ENCODE measurements at regions of chr9 and their contacts with region 1.

Region 1: DNA sequence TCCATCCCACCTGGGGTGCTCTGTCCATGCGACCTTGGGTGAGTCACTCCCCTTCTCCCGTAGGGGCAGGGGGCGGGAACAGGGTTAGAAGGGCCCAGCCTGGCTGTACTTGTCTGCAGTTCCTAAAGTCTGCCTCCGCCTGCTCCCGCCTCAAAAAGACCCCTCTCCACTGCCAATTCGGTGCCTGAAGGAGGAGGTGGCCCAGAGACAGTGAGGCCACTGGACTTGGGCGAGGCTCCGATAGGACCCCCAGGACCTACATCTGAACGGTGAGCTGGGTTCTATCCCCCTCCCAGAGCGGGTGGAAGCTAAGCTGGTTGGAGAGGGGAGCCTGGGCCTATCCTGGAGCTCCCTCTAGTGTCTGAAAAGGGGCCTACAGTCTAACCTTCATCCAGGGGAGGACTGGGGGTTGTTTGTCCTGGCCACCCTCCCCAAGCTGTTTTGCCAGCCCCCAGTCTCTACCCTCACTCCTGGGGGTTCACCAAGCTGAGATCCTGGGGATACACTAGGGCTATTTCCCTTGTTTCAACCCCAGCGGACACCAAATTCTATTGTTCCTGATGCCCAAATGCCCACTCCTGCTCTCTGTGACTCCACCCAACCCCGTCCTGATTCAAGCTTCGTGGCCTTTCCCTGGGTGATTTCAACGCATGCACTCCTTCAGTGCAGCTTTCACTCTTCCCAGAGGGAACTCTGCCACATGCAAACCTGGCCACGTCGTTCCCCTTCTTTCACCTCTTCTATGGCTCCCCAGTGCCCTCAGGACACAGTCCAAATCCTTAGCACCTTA is 6.1 kb upstream of the CRB2 start:
- DNase-seq: peak; percentile 92
- H3K27ac ChIP-seq: no peak overlapping the region
- CTCF ChIP-seq: peak; percentile 100

Region 2: DNA sequence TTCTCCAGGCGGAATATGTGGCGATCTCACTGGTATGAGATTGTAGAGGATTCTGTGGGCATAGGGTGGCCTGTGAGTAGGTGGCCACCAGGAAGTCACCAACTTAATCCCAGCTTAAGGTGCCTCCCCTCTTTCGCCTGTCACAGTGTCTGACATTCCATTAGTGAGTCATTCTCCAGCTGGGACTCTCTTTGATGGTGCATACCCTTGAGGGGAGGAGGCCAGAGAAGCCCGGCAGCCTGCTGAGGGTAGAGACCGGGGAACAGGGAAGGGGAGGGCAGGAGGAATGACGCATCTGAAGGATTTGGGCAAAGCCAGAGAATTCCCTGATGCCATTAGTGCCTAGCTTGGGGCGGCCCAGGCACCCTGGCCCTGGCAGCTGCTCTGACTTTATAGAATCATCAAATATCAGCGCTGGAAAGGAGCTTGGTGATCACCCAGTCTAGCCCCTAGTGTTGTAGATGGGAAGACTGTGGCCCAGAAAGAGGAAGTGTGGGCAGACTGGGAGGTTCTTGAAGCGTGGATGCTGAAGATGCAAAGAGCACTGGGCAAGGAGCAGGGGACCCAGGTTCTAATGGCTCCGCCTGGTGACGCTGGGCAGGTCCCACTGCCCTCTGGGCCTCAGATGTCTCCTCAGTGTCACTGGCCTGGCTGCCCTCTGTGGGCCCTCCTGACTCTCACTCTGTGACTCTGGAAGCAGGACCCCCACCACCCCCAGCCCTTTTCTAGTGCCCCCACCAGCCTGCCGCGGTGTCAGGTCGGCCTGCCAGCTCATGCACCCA is 1657.1 kb before region 1 on chr9:
- CTCF ChIA-PET with region 1: no interaction called
- POLR2A ChIA-PET with region 1: no interaction called
- DNase-seq: peak; percentile 55
- H3K27ac ChIP-seq: peak overlapping the region; percentile 45
- CTCF ChIP-seq: no peak

Region 3: DNA sequence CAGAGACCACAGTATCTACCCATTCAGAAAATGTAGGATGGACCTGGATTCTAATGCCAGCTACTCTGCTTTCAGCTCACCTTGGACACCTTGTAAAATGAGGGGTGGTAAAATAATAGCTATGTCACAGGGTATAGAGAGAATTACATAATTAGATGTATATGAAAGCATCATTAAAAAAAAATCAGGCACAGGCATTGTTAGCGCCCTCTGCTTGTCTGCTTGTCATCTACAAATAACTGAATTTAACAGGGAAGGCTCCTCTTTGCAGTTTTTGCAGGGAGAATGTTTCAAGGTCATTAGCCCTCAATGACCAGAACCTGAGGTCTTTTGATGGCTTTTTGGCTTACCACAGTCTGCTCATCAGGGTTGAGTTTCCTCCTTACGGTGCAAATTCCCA is 258.4 kb before region 1 on chr9:
- CTCF ChIA-PET with region 1: interaction called, 14 read pairs
- POLR2A ChIA-PET with region 1: no interaction called
- DNase-seq: no peak
- H3K27ac ChIP-seq: no peak overlapping the region
- CTCF ChIP-seq: no peak

Region 4: GRCh38 chr9:123112015-123112975 is 237.6 kb before region 1 on chr9:
- CTCF ChIA-PET with region 1: interaction called, 12 read pairs
- POLR2A ChIA-PET with region 1: no interaction called
- DNase-seq: peak; percentile 56
- H3K27ac ChIP-seq: peak overlapping the region; percentile 4
- CTCF ChIP-seq: no peak

Region 5: GRCh38 chr9:123360161-123361085 is 10.5 kb after region 1 on chr9:
- CTCF ChIA-PET with region 1: interaction called, 11 read pairs
- POLR2A ChIA-PET with region 1: no interaction called
- DNase-seq: no peak
- H3K27ac ChIP-seq: peak overlapping the region; percentile 3; the same call in 1 of the 2 replicates
- CTCF ChIP-seq: no peak

Region 6: GRCh38 chr9:123478967-123479602 is 129.2 kb after region 1 on chr9:
- CTCF ChIA-PET with region 1: no interaction called
- POLR2A ChIA-PET with region 1: no interaction called
- DNase-seq: no peak
- H3K27ac ChIP-seq: no peak overlapping the region
- CTCF ChIP-seq: no peak

Region 7: GRCh38 chr9:123544007-123544827 is 194.3 kb after region 1 on chr9:
- CTCF ChIA-PET with region 1: no interaction called
- POLR2A ChIA-PET with region 1: no interaction called
- DNase-seq: peak; percentile 59
- H3K27ac ChIP-seq: no peak overlapping the region
- CTCF ChIP-seq: peak; percentile 97

Measured in RWPE1 (cell line).